CD4-positive, alpha-beta memory T cell (primary cell): ENCODE measurements at regions of chr2 and their contacts with region 1.

Region 1: DNA sequence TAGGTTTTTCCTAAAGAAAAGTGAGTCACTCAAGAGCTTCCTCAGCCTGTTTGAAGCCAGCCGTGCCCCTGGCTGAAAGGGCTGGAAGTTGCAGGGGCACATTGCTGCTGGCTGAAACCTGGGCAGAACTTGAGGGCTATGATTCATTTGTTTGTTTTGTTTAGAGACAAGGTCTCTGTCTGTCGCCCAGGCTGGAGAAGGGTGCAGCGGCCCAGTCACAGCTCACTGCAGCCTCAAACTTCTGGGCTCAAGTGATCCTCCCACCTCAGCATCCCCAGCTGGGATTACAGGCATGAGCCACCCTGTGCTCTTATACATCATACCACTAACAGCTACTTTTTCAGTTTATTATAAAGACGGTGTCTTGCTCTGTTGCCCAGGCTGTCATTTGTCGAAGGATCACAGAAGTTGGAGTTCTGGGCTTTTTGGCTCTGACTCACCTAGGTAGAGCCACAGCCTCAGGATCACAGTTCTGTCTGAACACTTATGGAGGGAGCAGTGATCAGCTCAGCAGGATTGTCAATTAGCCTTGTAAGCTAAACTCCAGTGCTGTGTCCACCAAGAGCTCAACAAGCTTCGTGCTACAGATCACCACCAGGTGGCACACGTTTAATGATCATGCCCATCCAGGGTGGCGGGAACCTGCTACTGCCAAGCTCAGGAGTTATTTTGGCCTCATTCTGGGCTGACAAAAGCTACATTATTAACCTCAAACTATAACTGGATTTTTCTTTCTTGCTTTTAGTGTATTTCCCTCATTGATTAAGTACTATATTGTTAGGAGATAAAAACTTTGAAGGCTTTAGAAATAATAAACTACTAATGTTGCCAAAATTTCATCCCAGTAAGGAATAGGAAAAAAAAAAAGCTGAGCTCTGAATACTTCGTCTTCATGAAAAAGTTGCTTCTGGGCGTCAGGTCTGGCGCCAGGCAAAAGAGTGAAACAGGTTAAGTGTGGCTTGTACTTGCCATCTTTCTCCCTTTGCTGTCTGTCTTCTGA is 57.9 kb downstream of the ARHGEF33 start:
- DNase-seq: peak; percentile 44 to 60 (median 49)
- H3K4me3 ChIP-seq: no peak overlapping the region
- H3K4me3 Mint-ChIP-seq: no peak overlapping the region
- H3K27ac ChIP-seq: no peak overlapping the region
- H3K27ac Mint-ChIP-seq: no peak overlapping the region
- H3K4me1 ChIP-seq: no peaks in the 10 kb centered on the region
- H3K4me1 Mint-ChIP-seq: no peaks in the 10 kb centered on the region
- H3K27me3 ChIP-seq: no peaks in the 10 kb centered on the region
- H3K27me3 Mint-ChIP-seq: peaks cover 0 to 2% of the 10 kb centered on the region in 2 donors

Region 2: GRCh38 chr2:38935568-38936172 is 11.9 kb before region 1 on chr2:
- CTCF ChIA-PET with region 1: interaction called, 30 read pairs
- POLR2A ChIA-PET with region 1: no interaction called
- intact Hi-C with region 1: no loop called
- DNase-seq: no peak
- H3K4me3 ChIP-seq: no peak overlapping the region
- H3K4me3 Mint-ChIP-seq: no peak overlapping the region
- H3K27ac ChIP-seq: no peak overlapping the region
- H3K27ac Mint-ChIP-seq: no peak overlapping the region
- H3K4me1 ChIP-seq: no peaks in the 10 kb centered on the region
- H3K4me1 Mint-ChIP-seq: no peaks in the 10 kb centered on the region
- H3K27me3 ChIP-seq: no peaks in the 10 kb centered on the region
- H3K27me3 Mint-ChIP-seq: peaks cover 0 to 7% of the 10 kb centered on the region in 2 donors

Region 3: DNA sequence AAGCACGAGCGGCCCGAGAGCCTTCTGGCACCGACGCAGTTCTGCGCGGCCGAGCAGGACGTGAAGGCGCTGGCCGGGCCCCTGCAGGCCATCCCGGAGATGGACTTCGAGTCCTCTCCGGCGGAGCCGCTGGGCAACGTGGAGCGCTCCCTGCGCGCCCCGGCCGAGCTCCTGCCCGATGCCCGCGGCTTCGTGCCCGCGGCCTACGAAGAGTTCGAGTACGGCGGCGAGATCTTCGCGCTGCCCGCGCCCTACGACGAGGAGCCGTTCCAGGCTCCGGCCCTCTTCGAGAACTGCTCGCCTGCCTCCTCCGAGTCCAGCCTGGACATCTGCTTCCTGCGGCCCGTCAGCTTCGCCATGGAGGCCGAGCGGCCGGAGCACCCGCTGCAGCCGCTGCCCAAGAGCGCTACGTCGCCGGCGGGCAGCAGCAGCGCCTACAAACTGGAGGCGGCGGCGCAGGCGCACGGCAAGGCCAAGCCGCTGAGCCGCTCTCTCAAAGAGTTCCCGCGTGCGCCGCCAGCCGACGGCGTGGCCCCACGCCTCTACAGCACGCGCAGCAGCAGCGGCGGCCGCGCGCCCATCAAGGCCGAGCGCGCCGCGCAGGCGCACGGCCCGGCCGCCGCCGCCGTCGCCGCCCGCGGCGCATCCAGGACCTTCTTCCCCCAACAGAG is 12.5 kb after region 1 on chr2:
- CTCF ChIA-PET with region 1: interaction called, 15 read pairs
- POLR2A ChIA-PET with region 1: no interaction called
- intact Hi-C with region 1: no loop called
- DNase-seq: peak; percentile 60 to 72 (median 67)
- H3K4me3 ChIP-seq: peak overlapping the region in 1 of 2 donors; percentile 17
- H3K4me3 Mint-ChIP-seq: peak overlapping the region in 7 of 8 donors; percentile 24 to 68 (median 35)
- H3K27ac ChIP-seq: no peak overlapping the region
- H3K27ac Mint-ChIP-seq: no peak overlapping the region
- H3K4me1 ChIP-seq: no peaks in the 10 kb centered on the region
- H3K4me1 Mint-ChIP-seq: peaks cover 0 to 10% (median under 1%) of the 10 kb centered on the region in 4 donors
- H3K27me3 ChIP-seq: peaks cover 3% of the 10 kb centered on the region
- H3K27me3 Mint-ChIP-seq: peaks cover 7 to 22% of the 10 kb centered on the region in 2 donors

Region 4: GRCh38 chr2:39059366-39059952 is 111.9 kb after region 1 on chr2:
- CTCF ChIA-PET with region 1: interaction called, 47 read pairs
- POLR2A ChIA-PET with region 1: no interaction called
- intact Hi-C with region 1: loop called (anchors 2 kb)
- DNase-seq: peak in 4 of 5 donors; percentile 61 to 65 (median 62)
- H3K4me3 ChIP-seq: no peak overlapping the region
- H3K4me3 Mint-ChIP-seq: no peak overlapping the region
- H3K27ac ChIP-seq: no peak overlapping the region
- H3K27ac Mint-ChIP-seq: peak overlapping the region in 3 of 7 donors; percentile 0 to 68 (median 35)
- H3K4me1 ChIP-seq: no peaks in the 10 kb centered on the region
- H3K4me1 Mint-ChIP-seq: peaks cover 1 to 11% (median 4%) of the 10 kb centered on the region in 4 donors
- H3K27me3 ChIP-seq: no peaks in the 10 kb centered on the region
- H3K27me3 Mint-ChIP-seq: no peaks in the 10 kb centered on the region